ENCODE measurements at regions of chr14 and their contacts with region 1.

Region 1: DNA sequence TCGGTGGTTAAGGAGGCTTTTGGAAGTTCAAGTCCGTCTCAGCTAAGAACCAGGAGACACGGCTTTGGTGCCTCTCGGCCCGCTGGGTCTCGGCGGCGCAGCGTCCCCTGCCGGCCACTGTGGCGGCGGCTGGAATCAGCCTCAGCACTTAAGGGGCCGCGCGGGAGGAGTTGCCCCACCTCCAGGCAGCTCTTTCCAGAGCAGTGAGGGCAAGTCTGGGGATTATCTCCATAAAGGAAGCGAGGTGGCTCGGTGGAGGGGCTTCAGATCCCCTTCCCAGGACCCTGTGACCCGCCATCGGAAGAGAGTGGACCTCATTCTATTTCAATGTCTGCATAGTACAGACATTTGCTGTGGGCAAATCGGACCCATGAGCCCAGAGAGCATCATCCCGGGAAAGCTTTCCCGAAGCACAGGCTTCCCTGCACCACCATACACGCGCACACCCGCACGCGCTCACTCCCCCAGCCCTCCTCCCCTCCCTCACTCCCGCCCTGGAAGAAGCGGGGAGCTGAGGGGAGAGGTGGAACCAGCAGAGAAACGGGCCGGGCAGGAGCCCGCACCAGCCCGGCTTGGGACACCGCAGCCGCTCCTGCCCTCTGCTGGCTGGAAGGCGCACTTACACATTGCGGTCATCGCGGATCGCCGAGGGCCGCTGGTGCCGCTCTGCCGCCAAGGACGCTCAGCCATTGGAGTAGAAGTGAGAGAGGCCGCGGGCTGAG is 15.9 kb downstream of the RNASE2 start:
- DNase-seq: no peak
- H3K4me3 ChIP-seq: peak overlapping the region; percentile 43 to 75 (median 62)
- H3K27ac ChIP-seq: peak overlapping the region; percentile 60 to 88 (median 82)
- H3K4me1 ChIP-seq: peaks cover 0 to 28% (median 4%) of the 10 kb centered on the region in 3 donors
- H3K27me3 ChIP-seq: peaks cover 0 to 7% (median 0%) of the 10 kb centered on the region in 4 donors
- CTCF ChIP-seq: peak; percentile 72 to 96 (median 90)
- POLR2A ChIP-seq: no peak

Region 2: DNA sequence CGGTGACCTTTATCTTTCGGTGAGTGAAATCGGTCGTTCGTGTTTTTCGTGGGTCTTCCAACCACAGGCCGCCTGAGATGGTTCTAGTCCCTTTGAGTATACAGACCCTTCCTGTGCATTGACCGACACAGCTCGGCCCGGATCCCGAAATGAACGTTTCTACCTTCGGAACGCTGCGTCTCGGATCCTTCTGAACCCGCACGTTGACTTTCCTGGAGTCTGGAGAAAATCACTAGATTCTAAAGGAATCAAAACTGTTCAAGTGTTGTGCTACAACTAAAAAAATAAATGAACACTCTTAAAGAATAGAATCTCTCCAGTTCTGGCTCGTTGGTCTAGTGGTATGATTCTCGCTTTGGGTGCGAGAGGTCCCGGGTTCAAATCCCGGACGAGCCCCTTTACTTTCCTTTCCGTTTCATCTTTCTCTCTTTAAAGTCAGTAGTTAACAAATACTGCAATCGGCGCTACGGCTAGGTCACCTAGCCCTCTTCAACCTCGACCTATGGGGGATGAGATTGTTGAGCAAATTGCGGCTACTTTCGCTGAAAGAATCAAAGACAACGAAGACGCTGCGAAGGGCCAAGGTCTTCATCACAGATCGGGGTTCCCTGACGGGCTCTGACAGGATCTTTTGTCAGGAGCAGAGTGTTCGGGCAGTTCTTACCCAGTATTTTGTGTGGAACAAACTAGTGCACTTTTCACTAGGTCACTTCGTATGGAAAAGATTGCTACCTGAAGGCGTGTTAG is 338.3 kb before region 1 on chr14:
- intact Hi-C with region 1: no loop called
- DNase-seq: no peak
- H3K4me3 ChIP-seq: peak overlapping the region; percentile 5 to 43 (median 38)
- H3K27ac ChIP-seq: peak overlapping the region in 1 of 4 donors; percentile 11
- H3K4me1 ChIP-seq: peaks cover 19 to 41% (median 31%) of the 10 kb centered on the region in 3 donors
- H3K27me3 ChIP-seq: peaks cover 0 to 71% (median 4%) of the 10 kb centered on the region in 4 donors
- CTCF ChIP-seq: no peak
- POLR2A ChIP-seq: no peak

Region 3: DNA sequence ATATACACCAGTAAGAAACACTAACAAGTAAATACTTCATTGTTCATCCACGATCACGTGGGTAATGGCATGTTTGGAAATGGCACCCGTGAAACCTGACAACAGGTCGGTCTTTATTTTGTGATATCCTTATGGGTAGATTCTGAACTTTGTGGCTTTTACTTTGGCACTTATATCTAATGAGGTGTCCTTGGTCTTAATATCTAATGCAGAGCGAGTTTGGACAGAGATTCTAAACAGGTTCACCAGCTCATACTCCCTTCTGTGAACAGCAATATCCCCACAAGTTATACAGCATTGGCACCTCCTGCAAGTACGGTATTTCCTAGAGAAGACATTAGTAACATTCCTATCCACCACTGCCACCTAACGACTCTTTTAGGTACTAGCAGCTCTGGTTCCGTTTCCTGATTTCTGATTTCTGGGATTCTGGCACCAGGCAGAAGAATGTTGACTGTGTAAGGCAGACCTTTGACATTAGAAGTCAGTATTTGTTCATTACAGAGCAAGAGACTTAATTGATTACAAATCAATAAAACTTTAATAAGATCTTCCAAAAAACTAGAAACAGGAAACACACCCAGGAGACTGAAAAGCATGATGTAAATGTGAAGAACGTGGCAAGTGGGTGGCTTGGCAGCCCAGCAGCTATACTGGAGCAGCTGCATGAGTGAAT is 280.2 kb before region 1 on chr14:
- intact Hi-C with region 1: loop called (anchors 10 kb)
- DNase-seq: no peak
- H3K4me3 ChIP-seq: peak overlapping the region in 2 of 4 donors; percentile 7 to 10
- H3K27ac ChIP-seq: peak overlapping the region in 2 of 4 donors; percentile 12 to 59
- H3K4me1 ChIP-seq: peaks cover 0 to 28% (median 4%) of the 10 kb centered on the region in 3 donors
- H3K27me3 ChIP-seq: no peaks in the 10 kb centered on the region
- CTCF ChIP-seq: peak; percentile 62 to 92 (median 86)
- POLR2A ChIP-seq: no peak

Region 4: DNA sequence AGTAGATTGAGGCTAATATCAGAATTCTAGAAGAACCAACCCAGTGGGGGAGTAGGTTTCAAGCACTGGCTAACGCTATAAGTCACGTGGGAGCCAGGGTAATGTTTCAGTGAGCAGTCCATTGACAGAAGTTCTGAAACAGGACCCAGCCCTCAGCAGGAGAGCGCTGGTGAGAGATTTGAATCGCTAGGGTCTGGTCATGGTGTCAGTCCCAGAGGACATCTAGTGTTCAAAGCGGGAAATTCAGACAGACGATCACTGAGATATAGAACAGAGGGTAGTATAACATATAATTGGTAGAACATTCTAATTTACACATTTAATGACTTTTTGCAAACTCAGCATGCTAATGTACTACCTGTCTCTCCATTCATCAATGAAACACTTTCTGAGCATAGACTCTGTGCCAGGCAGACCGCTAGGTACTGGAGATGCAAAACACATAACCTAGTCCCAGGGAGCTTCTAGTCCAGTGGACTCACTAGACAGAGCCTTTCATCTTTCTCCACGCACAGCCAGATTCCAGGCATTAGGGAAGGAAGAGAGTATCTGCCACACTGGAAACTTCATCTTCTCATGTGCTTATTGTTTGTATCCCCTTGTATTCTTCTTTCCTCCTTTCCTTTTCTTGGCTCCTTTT is 115.4 kb before region 1 on chr14:
- intact Hi-C with region 1: loop called (anchors 5 kb)
- DNase-seq: peak; percentile 5
- H3K4me3 ChIP-seq: no peak overlapping the region
- H3K27ac ChIP-seq: no peak overlapping the region
- H3K4me1 ChIP-seq: peaks cover 0 to 10% (median 0%) of the 10 kb centered on the region in 3 donors
- H3K27me3 ChIP-seq: peaks cover 0 to 28% (median 0%) of the 10 kb centered on the region in 4 donors
- CTCF ChIP-seq: peak; percentile 52 to 81 (median 75)
- POLR2A ChIP-seq: no peak